GM12878 (cell line): ENCODE measurements at regions of chr2 and their contacts with region 1.

Region 1: DNA sequence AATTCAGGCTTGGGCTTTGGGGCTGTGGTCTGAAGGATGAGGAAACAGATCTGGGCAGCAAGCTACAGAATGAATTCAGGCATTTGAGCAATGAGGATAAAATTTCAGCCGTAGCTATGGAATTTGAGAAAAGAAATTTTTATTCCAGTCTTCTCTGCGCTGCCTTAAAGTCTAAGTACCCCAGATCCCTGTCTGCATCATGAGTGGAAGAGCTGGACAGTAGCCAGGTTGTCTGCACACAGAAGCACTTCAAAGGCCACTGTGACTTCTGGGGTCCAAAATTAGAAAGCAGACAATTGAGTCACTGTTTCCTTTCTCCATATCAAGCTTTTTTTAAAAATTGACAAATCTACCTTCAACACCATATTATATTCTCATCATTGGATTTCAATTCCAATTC is 787.6 kb upstream of the GCFC2 start:
- DNase-seq: no peak
- ATAC-seq: no peak
- H3K4me3 ChIP-seq: no peak overlapping the region
- H3K27ac ChIP-seq: no peak overlapping the region
- H3K4me1 ChIP-seq: no peaks in the 10 kb centered on the region
- H3K27me3 ChIP-seq: no peaks in the 10 kb centered on the region
- CTCF ChIP-seq: no peak
- EP300 ChIP-seq: no peak
- POLR2A ChIP-seq: no peak
- RAD21 ChIP-seq: no peak

Region 2: GRCh38 chr2:76478266-76479035 is 19.9 kb before region 1 on chr2:
- CTCF ChIA-PET with region 1: no interaction called
- POLR2A ChIA-PET with region 1: no interaction called
- RAD21 ChIA-PET with region 1: no interaction called
- SMC1A ChIA-PET with region 1: interaction called, 4 read pairs
- in situ Hi-C with region 1: no loop called
- intact Hi-C with region 1: loop called (anchors 1 kb)
- DNase-seq: no peak
- ATAC-seq: no peak
- H3K4me3 ChIP-seq: no peak overlapping the region
- H3K27ac ChIP-seq: no peak overlapping the region
- H3K4me1 ChIP-seq: no peaks in the 10 kb centered on the region
- H3K27me3 ChIP-seq: no peaks in the 10 kb centered on the region
- CTCF ChIP-seq: no peak
- EP300 ChIP-seq: no peak
- POLR2A ChIP-seq: no peak
- RAD21 ChIP-seq: no peak